ENCODE measurements at regions of chr15 and their contacts with region 1.

Region 1: DNA sequence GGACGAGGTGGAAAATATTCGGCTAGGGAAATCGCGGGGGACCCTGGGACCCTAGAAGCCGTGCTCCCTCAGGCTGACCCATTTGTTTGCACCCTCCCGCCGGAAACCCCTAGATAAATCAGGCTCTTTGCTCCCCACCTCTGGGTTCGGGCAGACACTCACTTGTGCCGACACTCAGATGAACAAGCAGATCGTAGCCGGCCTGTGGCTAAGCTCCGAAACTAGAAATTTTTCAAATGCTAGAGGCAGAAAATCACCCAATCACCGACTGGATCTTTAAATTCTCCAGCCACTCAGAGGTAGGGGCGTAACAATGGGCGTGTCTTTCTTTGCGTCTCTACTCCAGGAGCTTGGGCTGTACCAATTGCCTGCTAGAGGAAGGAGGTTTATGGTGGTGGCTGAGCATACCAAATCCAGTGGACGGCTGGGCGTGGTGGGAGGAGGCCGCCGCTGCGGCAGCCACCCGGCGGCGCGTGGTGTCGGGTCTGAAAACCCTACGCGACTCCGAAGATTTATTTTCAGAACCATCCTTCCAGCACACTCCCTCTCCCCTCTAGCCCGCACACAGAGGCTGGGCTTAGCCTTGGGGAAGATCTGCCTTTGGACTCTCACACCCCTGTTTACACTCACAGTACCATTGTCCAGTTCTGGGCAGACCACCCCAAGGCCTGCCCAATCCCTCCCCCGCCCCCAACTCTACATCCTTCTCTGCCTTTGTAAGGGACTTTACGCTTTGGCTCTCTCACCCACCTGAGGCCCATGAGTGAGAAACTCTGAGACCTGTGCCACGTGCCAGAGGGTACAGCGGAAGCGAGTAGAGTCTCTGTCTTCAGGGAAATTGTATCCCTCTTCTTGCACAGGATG is at the start of gene PIF1:
- DNase-seq: peak; percentile 97
- ATAC-seq: peak; percentile 94
- H3K4me3 Mint-ChIP-seq: peak within 1 kb of the TSS; percentile 93
- H3K27ac Mint-ChIP-seq: peak within 1 kb of the TSS; percentile 87
- H3K4me1 Mint-ChIP-seq: peaks cover 17% of the 10 kb centered on the region
- H3K27me3 Mint-ChIP-seq: peaks cover 5% of the 10 kb centered on the region
- CTCF ChIP-seq: no peak
- total RNA-seq, gene PIF1: 50.0 TPM

Region 2: GRCh38 chr15:64251121-64251520 is 574.5 kb before region 1 on chr15:
- CTCF ChIA-PET with region 1: no interaction called
- POLR2A ChIA-PET with region 1: no interaction called
- intact Hi-C with region 1: no loop called
- DNase-seq: peak; percentile 37
- ATAC-seq: peak; percentile 17
- H3K4me3 Mint-ChIP-seq: no peak overlapping the region
- H3K27ac Mint-ChIP-seq: no peak overlapping the region
- H3K4me1 Mint-ChIP-seq: peaks cover 40% of the 10 kb centered on the region
- H3K27me3 Mint-ChIP-seq: no peaks in the 10 kb centered on the region
- CTCF ChIP-seq: no peak

Region 3: GRCh38 chr15:64634576-64635498 is 190.8 kb before region 1 on chr15:
- CTCF ChIA-PET with region 1: no interaction called
- POLR2A ChIA-PET with region 1: no interaction called
- intact Hi-C with region 1: no loop called
- DNase-seq: peak; percentile 77
- ATAC-seq: peak; percentile 57
- H3K4me3 Mint-ChIP-seq: peak overlapping the region; percentile 31
- H3K27ac Mint-ChIP-seq: peak overlapping the region; percentile 82
- H3K4me1 Mint-ChIP-seq: peaks cover 64% of the 10 kb centered on the region
- H3K27me3 Mint-ChIP-seq: no peaks in the 10 kb centered on the region
- CTCF ChIP-seq: no peak

Region 4: GRCh38 chr15:64836023-64836536 is 10.4 kb after region 1 on chr15:
- CTCF ChIA-PET with region 1: interaction called, 19 read pairs
- POLR2A ChIA-PET with region 1: interaction called, 11 read pairs
- intact Hi-C with region 1: no loop called
- DNase-seq: no peak
- ATAC-seq: peak; percentile 7
- H3K4me3 Mint-ChIP-seq: peak overlapping the region; percentile 45
- H3K27ac Mint-ChIP-seq: peak overlapping the region; percentile 63
- H3K4me1 Mint-ChIP-seq: peaks cover 45% of the 10 kb centered on the region
- H3K27me3 Mint-ChIP-seq: no peaks in the 10 kb centered on the region
- CTCF ChIP-seq: peak; percentile 55

Region 5: GRCh38 chr15:64841258-64842095 is 15.8 kb after region 1 on chr15 and contains the start of gene PLEKHO2:
- CTCF ChIA-PET with region 1: interaction called, 19 read pairs
- POLR2A ChIA-PET with region 1: interaction called, 11 read pairs
- intact Hi-C with region 1: no loop called
- DNase-seq: peak; percentile 93
- ATAC-seq: peak; percentile 76
- H3K4me3 Mint-ChIP-seq: peak within 1 kb of the TSS; percentile 86
- H3K27ac Mint-ChIP-seq: peak within 1 kb of the TSS; percentile 89
- H3K4me1 Mint-ChIP-seq: peaks cover 67% of the 10 kb centered on the region
- H3K27me3 Mint-ChIP-seq: no peaks in the 10 kb centered on the region
- CTCF ChIP-seq: peak; percentile 47
- total RNA-seq, gene PLEKHO2: 10.1 to 10.4 TPM

Region 6: DNA sequence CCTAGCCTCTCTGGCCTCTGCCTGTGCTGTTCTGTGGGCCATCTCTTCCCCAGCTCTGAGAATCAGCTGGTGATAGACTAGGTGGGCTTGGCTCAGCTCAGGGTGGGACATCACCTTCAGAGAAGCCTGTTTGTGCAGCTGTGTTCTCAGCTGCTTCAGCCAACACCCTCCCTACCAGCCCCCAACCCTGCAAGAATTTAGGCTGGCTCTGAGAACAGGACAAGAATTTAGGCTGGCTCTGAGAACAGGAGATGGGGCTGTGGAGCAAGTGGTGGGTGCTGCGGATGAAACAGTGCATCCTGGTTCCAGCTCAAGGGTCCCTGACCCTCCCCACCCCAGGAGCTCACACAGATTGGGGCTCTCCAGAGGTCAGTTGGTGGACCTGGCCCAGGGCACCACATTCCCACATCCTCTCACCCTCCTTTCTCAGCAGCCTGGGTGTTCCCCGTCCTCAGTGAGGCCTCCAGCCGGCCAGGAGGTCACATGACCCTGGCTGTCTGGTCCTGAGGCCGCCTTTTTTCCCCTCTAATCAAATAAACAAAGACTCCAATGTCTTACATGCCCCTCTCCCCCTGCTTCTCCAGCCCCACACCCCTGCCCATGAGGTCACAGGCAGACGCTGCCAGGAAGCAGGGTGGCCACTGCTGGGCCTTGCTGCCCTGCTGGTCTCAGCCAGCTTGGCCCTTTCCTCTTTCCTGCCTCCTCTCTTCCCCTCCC is 30.9 kb after region 1 on chr15:
- CTCF ChIA-PET with region 1: no interaction called
- POLR2A ChIA-PET with region 1: no interaction called
- intact Hi-C with region 1: no loop called
- DNase-seq: no peak
- ATAC-seq: no peak
- H3K4me3 Mint-ChIP-seq: no peak overlapping the region
- H3K27ac Mint-ChIP-seq: peak overlapping the region; percentile 69
- H3K4me1 Mint-ChIP-seq: peaks cover 30% of the 10 kb centered on the region
- H3K27me3 Mint-ChIP-seq: no peaks in the 10 kb centered on the region
- CTCF ChIP-seq: no peak

Region 7: DNA sequence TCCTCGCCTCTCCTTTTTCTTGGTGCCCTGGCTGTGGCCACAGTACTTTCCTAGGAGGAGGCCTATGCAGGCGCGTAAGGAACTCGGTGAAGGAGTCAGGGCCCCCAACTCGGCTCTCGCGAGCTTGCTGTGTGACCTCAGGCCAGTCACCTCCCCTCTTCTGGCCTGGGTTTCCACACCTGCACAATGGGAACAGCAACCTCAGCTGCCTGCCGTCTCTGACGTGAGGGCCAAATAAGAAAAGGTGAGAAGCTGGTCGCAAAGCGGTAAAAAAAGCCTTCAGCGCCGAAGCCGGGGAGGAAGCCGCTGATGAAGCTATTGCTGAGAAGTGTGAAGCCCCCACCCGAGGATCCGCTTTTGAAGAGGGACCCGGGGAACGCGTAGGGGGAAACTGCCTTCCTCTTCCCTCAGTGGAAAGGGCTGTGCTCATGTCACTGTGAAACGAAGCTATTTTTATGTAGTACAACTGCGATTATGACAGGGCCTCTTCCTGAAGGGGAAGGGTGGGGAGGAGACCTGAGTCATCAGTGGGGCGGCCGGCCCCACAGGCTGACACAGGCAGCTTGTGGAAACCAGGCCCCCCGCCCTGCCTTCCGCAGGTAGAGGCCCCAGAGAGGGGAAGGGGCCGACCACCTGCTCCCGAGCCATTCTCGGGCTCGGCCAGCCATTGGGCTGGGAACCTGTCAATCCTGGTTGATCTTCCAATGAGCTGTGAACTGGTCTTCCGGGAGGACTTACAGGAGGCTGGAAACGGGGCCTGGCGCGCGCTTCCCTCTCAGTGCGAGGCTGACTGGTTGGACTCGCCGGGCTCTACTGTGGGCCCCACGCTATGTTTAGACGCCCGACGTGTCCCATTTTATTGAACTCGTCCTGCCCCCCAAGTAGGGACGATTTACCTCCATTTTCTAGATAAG is 68.1 kb after region 1 on chr15:
- CTCF ChIA-PET with region 1: interaction called, 3 read pairs
- POLR2A ChIA-PET with region 1: interaction called, 4 read pairs
- intact Hi-C with region 1: loop called (anchors 5 kb)
- DNase-seq: peak; percentile 99
- ATAC-seq: peak; percentile 82
- H3K4me3 Mint-ChIP-seq: peak overlapping the region; percentile 91
- H3K27ac Mint-ChIP-seq: peak overlapping the region; percentile 99
- H3K4me1 Mint-ChIP-seq: peaks cover 54% of the 10 kb centered on the region
- H3K27me3 Mint-ChIP-seq: no peaks in the 10 kb centered on the region
- CTCF ChIP-seq: no peak

Measured in activated CD8-positive, alpha-beta T cell treated with anti-CD3 and anti-CD28 coated beads for 36 hours (primary cell).